ENCODE measurements at regions of chr6 and their contacts with region 1.

Region 1: DNA sequence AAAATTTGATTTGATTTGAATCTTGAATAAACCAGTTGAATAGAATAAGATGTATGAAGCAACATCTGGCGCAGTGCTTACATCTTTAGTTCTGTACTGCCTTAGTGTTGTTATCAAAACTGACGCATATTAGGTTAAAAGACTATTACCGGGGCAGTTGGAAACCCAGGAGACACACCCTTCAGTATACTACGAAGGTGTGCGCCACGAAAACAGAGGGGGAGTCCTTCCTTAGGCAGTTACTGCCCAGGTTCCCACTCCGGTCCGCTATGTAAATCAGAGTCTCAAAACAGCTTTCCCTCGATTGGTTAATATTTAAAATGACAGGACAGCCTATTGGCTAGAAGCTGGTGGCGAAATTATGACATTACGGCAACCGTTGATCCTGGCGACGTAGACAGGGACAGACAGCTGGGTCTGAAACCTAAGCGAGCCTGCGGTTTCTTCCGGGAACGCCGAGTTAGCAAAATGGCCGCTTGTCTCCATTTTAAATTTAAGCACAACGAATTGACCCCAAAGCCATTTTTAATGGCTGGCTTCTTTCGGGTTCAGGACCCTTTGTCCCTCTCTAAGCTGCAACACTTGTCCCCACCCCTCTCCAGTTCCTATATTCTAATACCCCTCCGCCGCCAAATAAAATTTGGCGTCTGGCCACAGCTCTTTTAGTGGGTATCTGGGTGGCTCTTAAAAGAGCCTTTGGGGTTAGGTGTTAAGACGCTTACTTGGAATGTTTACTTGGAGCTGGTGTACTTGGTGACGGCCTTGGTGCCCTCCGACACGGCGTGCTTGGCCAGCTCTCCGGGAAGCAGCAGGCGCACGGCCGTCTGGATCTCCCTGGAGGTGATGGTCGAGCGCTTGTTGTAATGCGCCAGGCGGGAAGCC is 35.8 kb downstream of the HFE start:
- DNase-seq: peak; percentile 98
- ATAC-seq: peak; percentile 50
- H3K4me3 Mint-ChIP-seq: peak overlapping the region; percentile 95
- H3K27ac Mint-ChIP-seq: peak overlapping the region; percentile 100
- H3K4me1 Mint-ChIP-seq: peaks cover 44% of the 10 kb centered on the region
- H3K27me3 Mint-ChIP-seq: peaks cover 1% of the 10 kb centered on the region

Region 2: DNA sequence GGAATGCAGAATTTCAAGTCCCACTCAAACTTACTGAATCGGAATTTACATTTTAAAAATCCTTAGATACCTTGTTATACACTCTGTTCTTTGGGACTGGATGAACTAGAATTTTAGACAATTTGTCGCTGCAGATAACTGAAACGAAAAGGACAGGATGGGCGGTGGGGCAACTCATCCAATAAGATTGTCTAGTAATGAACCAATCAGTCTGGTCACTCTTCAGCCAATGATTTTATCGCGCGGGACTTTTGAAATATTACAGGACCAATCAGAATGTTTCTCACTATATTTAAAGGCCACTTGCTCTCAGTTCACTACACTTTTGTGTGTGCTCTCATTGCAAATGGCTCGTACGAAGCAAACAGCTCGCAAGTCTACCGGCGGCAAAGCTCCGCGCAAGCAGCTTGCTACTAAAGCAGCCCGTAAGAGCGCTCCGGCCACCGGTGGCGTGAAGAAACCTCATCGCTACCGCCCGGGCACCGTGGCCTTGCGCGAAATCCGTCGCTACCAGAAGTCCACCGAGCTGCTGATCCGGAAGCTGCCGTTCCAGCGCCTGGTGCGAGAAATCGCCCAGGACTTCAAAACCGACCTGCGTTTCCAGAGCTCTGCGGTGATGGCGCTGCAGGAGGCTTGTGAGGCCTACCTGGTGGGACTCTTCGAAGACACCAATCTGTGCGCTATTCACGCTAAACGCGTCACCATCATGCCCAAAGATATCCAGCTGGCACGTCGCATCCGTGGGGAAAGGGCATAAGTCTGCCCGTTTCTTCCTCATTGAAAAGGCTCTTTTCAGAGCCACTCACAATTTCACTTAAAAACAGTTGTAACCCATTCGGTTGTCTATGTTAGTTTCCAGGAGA is 77.7 kb before region 1 on chr6:
- CTCF ChIA-PET with region 1: interaction called, 6 read pairs
- POLR2A ChIA-PET with region 1: interaction called, 263 read pairs
- DNase-seq: peak; percentile 91
- ATAC-seq: peak; percentile 55
- H3K4me3 Mint-ChIP-seq: peak overlapping the region; percentile 88
- H3K27ac Mint-ChIP-seq: peak overlapping the region; percentile 99
- H3K4me1 Mint-ChIP-seq: peaks cover 43% of the 10 kb centered on the region
- H3K27me3 Mint-ChIP-seq: no peaks in the 10 kb centered on the region

Region 3: GRCh38 chr6:26103770-26104456 is 19.1 kb before region 1 on chr6:
- CTCF ChIA-PET with region 1: interaction called, 9 read pairs
- POLR2A ChIA-PET with region 1: interaction called, 261 read pairs
- DNase-seq: peak; percentile 93
- ATAC-seq: peak; percentile 89
- H3K4me3 Mint-ChIP-seq: peak overlapping the region; percentile 85
- H3K27ac Mint-ChIP-seq: peak overlapping the region; percentile 98
- H3K4me1 Mint-ChIP-seq: peaks cover 26% of the 10 kb centered on the region
- H3K27me3 Mint-ChIP-seq: peaks cover 2% of the 10 kb centered on the region

Region 4: DNA sequence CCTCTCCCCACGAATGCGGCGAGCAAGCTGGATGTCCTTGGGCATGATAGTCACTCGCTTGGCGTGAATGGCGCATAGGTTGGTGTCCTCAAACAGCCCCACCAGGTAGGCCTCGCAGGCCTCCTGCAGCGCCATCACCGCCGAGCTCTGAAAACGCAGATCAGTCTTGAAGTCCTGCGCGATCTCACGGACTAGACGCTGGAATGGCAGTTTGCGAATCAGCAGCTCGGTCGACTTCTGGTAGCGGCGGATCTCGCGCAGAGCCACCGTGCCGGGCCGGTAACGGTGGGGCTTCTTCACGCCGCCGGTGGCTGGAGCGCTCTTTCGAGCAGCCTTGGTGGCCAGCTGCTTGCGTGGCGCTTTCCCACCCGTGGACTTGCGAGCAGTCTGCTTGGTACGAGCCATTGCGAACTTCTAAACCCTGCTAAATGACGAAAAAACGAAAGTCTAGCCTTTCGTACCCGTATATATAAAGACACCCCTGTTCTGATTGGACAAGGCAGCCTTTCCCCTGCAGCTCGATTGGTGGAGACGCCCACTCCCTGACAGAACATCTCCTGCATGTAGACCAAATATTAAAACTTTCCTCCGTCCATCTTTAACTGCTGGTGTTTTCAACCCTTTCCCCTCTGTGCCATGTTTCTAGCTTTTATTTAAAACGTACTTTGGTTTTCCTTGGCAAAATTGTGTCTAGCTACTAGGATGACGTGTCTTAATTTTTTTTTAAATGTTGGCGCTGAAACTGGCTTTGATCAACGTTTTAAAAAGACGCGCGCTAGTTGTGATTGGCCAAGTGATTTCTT is 74.0 kb after region 1 on chr6:
- CTCF ChIA-PET with region 1: interaction called, 4 read pairs
- POLR2A ChIA-PET with region 1: interaction called, 1,039 read pairs
- DNase-seq: peak; percentile 92
- ATAC-seq: peak; percentile 43
- H3K4me3 Mint-ChIP-seq: peak overlapping the region; percentile 99
- H3K27ac Mint-ChIP-seq: peak overlapping the region; percentile 93
- H3K4me1 Mint-ChIP-seq: peaks cover 50% of the 10 kb centered on the region
- H3K27me3 Mint-ChIP-seq: no peaks in the 10 kb centered on the region

Region 5: DNA sequence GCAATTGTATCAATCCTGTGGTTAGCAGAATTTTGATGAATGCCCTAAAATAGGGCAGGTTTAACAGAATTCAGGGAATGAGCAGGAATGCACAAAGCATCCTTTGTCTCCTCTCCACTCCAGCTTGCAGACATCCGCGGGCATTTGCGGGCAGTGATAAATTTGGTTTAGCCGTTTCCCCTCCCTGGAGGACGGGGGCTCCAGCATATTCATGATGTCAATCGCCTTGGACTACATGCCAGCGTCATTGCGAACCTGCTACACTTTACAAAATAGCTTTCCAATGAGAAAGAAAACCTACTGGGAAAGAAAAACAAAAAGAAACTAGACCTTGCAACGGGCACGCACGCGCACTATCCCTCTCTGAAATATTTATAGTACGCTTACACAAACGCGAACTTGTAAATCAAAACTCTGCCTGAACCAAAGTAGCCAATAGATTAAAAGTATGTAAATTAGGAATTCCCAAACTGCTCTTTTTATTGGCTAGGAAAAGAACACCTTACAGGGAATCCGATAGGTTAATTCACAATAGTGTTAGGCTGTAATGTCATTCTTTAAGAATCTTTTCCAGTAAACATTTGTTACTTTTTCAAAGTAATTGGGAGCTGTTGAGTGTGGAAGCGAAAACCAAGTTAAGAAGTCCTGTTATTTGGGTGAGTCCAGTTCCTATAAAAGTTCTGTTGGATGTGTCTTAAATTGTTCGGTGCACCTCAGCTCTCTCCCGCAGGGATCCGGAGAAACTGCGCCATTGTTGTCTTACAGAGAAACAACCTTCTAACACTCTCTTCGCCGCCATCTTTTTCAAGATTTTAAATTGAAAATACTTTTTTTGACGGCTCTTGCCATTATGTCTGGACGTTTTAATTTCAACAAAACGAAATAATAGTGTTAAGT is 100.9 kb after region 1 on chr6:
- CTCF ChIA-PET with region 1: no interaction called
- POLR2A ChIA-PET with region 1: interaction called, 43 read pairs
- DNase-seq: peak; percentile 83
- ATAC-seq: peak; percentile 83
- H3K4me3 Mint-ChIP-seq: no peak overlapping the region
- H3K27ac Mint-ChIP-seq: no peak overlapping the region
- H3K4me1 Mint-ChIP-seq: peaks cover 37% of the 10 kb centered on the region
- H3K27me3 Mint-ChIP-seq: no peaks in the 10 kb centered on the region

Region 6: DNA sequence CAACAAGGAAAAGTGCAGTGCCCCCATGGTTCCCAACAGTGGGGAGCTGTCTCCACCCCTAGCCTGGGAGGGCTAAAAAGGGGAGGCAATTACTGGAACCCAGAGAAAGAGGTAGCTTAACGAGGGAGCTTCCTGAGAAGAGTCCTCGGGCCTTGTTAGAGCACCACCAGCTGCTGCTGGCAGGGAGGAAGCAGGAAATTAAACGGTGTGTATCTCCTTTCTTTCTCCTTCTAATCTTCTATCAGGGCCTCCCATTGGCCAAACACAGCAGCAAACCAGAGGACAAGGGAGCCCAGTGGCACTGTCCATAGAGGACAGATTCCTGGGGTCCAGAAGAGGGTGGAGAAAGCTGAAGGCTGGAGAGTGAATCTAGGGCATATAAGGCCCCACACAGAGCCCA is 252.2 kb after region 1 on chr6:
- CTCF ChIA-PET with region 1: no interaction called
- POLR2A ChIA-PET with region 1: no interaction called
- DNase-seq: no peak
- ATAC-seq: no peak
- H3K4me3 Mint-ChIP-seq: no peak overlapping the region
- H3K27ac Mint-ChIP-seq: peak overlapping the region; percentile 31
- H3K4me1 Mint-ChIP-seq: peaks cover 6% of the 10 kb centered on the region
- H3K27me3 Mint-ChIP-seq: no peaks in the 10 kb centered on the region

Region 7: DNA sequence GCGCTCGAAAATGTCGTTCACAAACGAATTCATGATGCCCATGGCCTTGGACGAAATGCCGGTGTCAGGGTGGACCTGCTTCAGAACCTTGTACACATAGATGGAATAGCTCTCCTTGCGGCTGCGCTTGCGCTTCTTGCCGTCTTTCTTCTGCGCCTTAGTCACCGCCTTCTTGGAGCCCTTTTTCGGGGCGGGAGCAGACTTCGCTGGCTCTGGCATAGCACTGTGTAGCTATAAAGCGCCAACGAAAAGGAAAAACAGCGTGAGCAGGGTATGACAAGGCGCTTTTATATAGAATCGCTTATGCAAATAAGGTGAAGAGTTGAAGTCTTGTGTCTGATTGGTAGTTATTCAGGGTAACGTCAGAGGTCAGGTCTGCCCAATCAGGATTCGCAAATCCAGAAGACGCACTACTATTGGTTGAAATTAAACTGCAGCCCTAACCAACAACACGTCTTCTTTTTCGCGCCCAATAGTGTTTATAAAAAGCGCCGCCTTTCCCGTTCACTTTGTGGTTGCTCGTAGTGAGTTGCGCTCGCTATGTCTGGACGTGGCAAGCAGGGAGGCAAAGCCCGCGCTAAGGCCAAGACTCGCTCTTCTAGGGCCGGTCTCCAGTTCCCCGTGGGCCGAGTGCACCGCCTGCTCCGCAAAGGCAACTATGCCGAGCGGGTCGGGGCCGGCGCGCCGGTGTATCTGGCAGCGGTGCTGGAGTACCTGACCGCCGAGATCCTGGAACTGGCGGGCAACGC is 1009.7 kb after region 1 on chr6:
- CTCF ChIA-PET with region 1: no interaction called
- POLR2A ChIA-PET with region 1: interaction called, 47 read pairs
- DNase-seq: peak; percentile 95
- ATAC-seq: peak; percentile 76
- H3K4me3 Mint-ChIP-seq: no peak overlapping the region
- H3K27ac Mint-ChIP-seq: no peak overlapping the region
- H3K4me1 Mint-ChIP-seq: peaks cover 68% of the 10 kb centered on the region
- H3K27me3 Mint-ChIP-seq: no peaks in the 10 kb centered on the region

Region 8: DNA sequence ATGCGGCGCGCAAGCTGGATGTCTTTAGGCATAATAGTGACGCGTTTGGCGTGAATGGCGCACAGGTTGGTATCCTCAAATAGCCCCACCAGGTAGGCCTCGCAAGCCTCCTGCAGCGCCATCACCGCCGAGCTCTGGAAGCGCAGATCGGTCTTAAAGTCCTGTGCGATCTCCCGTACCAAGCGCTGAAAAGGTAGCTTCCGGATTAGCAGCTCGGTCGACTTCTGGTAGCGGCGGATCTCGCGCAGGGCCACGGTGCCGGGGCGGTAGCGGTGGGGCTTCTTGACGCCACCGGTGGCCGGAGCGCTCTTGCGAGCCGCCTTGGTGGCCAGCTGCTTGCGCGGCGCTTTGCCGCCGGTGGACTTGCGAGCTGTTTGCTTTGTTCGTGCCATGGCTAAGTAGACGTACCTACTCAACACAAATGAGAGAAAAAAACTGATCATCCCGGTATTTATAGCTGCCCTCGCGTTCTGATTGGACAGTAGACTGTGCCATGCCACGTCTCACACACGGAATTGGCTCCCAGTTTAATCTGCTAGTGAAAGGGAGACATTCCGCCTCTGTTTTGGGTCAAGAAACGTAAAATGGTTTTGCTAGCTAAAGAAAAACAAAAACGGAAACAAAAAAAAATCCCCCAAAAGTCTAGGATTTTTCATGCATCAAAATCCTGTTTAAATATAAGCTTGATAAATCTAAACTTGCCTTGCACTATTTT is 1749.0 kb after region 1 on chr6:
- CTCF ChIA-PET with region 1: no interaction called
- POLR2A ChIA-PET with region 1: interaction called, 66 read pairs
- DNase-seq: peak; percentile 92
- ATAC-seq: peak; percentile 62
- H3K4me3 Mint-ChIP-seq: peak overlapping the region; percentile 85
- H3K27ac Mint-ChIP-seq: peak overlapping the region; percentile 99
- H3K4me1 Mint-ChIP-seq: peaks cover 64% of the 10 kb centered on the region
- H3K27me3 Mint-ChIP-seq: no peaks in the 10 kb centered on the region

Measured in activated CD8-positive, alpha-beta T cell treated with anti-CD3 and anti-CD28 coated beads, Interleukin-2, amount 10 ng/mL, durations not matched to agents 7 days and 5 days (primary cell).